ENCODE measurements at regions of chr12 and their contacts with region 1.

Region 1: DNA sequence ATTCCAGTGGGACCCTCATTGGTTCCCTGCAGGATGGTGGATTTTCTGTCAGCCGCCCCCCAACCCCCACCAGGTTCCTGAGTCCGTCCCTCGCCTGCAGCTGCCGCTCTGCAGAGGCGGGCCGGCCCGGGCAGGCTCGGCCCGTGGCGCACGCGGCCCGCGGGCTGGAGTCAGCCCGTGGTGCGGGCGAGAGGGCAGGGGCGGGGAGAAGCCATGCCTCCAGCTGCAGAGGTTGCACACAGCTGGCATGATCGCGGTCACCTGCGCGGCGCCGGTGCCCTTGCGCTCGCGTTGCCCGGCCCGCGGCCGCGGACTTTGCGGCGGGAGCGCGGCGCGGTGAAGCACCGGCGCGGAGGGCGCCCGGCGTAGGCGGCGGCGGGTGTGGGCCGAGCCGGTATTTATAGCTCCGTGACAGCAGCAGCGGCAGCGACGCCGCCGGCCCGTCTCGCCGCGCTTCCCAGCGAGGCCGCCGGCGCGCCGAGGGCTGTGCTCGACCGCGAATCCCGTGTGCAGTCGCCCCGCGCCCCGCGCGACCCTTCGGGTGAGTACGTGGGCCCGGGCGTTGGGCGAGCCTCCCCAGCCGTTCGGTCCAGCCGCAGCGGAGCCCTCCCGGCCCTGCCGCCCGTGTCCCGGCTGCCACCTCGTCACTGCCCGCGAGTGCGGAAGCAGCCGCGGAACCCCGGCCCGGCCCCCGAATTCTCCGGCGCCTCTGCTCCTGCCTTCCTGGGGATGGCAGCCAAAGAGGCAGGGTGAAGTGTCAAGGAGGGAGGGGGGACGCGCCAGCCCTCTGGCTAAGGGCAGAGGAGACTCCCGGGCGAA is at the start of gene TMEM117:
- DNase-seq: peak; percentile 40 to 78 (median 55)
- ATAC-seq: peak; percentile 69
- H3K4me3 ChIP-seq: peak within 1 kb of the TSS; percentile 64
- H3K4me3 Mint-ChIP-seq: peak within 1 kb of the TSS; percentile 89
- H3K27ac ChIP-seq: peak within 1 kb of the TSS; percentile 73 to 79
- H3K27ac Mint-ChIP-seq: peak within 1 kb of the TSS; percentile 84
- H3K4me1 ChIP-seq: peaks cover 38% of the 10 kb centered on the region
- H3K4me1 Mint-ChIP-seq: peaks cover 62% of the 10 kb centered on the region
- H3K27me3 ChIP-seq: no peaks in the 10 kb centered on the region
- H3K27me3 Mint-ChIP-seq: no peaks in the 10 kb centered on the region
- CTCF ChIP-seq: no peak
- total RNA-seq, gene TMEM117: 3.4 to 4.4 TPM

Region 2: DNA sequence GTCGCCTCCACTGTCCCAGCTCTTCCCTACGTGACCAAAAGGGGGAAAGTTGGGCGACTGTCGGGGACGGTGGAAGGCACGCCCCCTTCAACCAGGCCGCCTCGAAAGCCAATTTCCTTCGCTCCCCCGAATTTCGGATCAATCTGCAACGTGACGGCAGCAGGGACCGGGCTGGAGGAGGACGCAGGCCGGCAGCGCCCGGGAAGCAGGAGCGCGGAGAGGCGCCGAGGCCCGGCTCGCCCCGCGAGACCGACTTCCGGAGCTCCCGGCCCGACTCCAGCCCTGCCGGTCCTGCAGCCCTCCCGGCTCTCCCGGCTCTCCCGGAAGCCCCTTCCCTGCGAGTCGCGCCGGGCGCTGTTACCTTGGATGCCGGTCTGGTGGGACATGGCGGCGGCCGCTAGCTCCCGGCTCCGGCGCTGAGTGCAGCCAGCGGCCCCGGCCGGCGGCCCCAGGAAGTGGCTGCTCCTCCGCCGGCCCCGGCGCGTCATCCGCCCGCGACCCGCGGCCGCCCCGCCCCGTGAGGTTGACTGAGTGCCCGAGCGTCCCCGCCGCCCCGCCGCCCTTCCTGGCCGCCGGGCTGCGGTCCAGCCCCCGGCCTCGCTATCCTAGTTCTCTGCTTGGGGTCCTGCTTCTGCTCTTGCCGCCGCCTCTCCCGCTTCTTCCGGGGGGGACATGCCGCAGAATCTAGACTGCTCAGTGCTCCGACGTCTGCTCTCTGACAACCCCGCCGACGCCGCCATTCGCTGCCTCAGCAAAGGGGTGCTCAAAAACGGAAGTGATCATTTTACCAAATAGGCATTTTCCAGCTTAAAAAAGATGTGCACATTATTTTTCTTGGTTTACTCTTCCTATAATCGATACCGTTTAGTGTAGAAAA is 29.8 kb before region 1 on chr12 and contains the start of gene TWF1:
- CTCF ChIA-PET with region 1: interaction called, 5 read pairs
- POLR2A ChIA-PET with region 1: interaction called, 153 read pairs
- intact Hi-C with region 1: loop called (anchors 1 to 2 kb)
- DNase-seq: peak; percentile 66 to 92 (median 80)
- ATAC-seq: peak; percentile 78
- H3K4me3 ChIP-seq: peak within 1 kb of the TSS; percentile 89
- H3K4me3 Mint-ChIP-seq: peak within 1 kb of the TSS; percentile 100
- H3K27ac ChIP-seq: peak within 1 kb of the TSS; percentile 87 to 94
- H3K27ac Mint-ChIP-seq: peak within 1 kb of the TSS; percentile 97
- H3K4me1 ChIP-seq: no peaks in the 10 kb centered on the region
- H3K4me1 Mint-ChIP-seq: peaks cover 48% of the 10 kb centered on the region
- H3K27me3 ChIP-seq: no peaks in the 10 kb centered on the region
- H3K27me3 Mint-ChIP-seq: no peaks in the 10 kb centered on the region
- CTCF ChIP-seq: no peak
- total RNA-seq, gene TWF1: 72.3 to 77.5 TPM